Left cardiac atrium (tissue), 4 donors: ENCODE measurements at regions of chr22 and their contacts with region 1.

Region 1: DNA sequence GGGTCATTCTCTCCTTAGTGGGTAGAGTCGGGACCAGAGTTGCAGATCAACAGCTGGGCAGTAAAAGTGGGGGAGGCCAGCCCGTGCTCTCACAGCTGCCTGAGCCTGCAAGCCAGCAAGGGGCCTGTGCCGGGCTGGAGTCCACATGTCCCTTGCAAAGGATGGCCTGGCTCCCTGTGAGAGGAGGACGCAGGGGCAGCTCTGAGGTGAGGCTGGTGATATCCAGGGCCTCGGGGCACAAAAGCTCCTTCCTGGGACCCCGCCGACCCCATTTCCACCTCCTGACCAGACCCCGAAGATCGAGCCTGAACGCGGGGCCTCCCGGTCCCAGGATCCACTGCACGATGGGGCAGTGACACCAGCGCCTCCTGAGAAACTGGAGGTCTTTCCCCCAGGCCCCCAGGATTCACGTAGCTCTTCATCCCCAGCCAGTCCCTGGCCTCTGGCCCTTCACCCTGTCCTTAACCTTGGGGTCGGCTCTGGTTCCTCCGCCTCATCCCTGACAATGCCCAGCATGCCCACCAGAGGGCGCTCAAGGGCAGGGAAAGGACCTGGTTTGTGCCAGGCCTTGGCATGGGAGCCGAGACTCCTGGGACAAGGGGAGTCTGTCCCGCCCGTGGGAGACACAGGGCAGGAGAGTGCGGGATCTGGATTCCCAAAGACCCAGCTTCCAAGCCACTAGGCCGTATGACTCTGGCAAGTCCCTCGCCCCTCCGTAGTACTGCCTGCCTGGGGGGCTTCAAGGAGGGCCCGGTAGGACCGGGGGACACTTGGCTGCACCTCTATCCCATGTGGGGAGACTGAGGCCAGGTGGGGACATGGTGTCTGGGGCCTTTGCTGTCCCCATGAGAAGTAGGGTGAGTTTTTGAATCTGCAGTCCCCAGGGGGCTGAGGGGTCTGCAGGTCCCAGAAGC is 17.8 kb upstream of the WNT7B start:
- DNase-seq: peak; percentile 85
- ATAC-seq: peak; percentile 37 to 49

Region 2: DNA sequence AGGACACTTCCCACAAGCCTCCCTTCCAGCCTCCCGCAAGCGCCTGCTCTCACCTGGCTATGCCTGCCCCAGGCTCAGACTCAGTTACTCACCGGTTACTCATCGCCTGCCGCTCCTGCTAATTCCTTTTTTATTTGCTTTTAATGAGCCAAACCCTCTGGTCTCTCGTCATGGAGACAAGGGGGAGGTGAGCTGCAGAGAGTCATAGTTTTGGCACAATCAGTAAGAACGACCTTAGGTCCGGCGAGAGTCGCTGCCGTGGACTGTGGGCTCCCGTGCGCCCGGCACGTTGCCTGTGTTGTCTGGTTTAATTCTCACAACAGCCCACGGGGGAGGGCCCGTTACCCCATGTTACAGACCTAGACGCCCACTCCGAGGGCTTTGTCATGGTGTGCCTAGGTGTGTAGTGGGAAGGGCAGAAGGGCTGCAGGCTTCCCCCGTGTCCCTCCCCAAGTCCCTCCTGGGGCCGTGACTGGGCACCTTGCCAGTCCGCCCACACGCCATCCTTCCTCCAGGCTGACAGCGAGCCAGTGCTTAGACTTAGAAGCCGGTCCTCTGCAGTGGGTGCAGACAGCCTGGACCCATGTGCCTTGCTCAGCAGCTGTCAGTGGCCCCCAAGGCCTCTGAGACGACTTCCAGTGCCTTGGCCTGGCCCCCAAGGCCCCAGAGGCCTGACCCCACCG is 59.9 kb before region 1 on chr22:
- intact Hi-C with region 1: no loop called
- DNase-seq: no peak
- ATAC-seq: peak; percentile 23 to 85

Region 3: DNA sequence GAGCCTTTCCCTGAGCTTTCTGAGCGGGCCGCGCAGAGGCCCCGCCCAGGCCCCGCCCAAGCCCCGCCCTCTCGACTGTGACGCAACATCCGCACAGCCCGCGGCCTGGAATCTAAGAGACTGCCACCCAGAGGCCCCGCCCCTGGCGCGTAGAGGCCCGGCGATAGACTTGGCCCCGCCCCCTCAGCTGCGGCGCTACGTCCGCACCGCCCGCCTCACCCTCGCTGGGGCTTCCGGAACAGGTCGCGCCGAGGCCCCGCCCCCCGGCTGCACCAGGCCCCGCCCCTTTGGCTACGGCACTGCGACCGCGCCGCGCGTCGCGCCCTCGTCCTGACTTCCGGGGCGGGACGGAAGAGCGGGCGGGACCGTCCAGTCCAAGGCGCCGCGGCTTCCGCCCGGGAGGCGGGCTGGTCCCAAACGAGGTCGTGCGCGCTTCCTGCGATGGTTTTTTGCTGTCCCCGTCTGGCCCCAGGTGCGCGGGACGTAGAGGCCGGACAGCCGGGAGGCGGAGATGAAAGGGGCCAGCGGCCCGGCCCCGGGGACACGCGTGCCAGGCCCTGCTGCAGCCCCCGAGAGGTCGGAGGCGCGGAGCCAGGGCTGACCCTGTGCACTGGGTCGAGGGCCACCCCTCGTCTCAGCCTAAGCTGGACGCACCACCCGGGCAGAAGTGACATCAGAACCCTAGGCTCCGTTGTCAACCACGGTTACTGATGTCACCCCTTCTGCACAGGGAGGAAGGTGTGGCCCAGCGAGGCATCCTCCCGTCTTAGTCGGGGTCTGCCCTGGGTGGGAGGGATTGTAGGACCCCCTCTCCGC is 41.2 kb after region 1 on chr22:
- intact Hi-C with region 1: no loop called
- DNase-seq: peak; percentile 100
- ATAC-seq: peak; percentile 95 to 97

Region 4: DNA sequence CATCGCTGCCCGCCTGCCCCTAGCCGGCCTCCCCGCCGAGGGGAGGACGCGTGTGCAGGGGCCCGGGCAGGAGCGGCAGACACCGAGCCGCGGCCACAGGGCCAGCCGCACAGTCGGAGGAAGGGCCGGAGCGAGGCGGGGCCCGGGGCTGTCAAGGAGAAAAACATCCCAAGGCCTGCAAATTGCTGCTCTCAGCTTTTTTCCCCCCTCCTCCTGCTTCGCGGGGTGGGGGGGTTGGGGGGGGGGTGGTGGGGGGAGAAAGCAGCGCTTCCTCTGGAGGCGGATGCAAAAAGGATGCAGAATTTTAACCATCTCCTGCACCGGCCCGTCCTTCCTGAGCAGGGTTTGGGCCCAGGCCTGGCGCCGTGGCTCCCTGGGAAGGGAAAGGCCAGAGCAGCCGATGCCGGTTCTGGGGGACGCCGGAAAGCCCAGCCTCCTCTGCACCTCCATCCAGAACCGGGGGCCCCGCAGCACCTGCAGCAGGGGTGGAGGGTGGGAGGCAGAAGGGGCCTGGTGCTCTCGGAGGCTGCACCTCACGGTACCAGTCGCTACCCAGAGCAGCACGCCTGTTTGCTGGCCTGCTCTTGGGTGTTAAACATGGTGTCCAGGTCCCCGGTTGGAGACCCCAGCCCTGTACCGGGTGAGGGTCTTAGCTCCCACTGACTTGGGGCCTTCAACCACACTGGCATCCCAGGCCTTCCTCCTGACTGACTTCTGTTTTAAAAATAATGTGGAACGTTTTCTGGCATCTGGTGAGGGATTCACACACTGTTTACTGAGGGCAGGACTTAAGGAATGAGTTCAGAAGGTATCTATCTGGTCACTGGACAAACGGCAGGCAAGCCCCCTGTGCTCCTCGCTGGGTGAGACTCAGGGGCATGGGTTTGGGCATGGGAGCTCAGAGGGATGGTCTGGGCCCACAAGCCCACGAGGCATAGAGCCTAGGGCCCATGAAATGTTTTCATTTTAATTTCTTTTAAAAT is 59.6 kb after region 1 on chr22:
- intact Hi-C with region 1: no loop called
- DNase-seq: peak; percentile 73
- ATAC-seq: peak; percentile 71 to 72

Region 5: DNA sequence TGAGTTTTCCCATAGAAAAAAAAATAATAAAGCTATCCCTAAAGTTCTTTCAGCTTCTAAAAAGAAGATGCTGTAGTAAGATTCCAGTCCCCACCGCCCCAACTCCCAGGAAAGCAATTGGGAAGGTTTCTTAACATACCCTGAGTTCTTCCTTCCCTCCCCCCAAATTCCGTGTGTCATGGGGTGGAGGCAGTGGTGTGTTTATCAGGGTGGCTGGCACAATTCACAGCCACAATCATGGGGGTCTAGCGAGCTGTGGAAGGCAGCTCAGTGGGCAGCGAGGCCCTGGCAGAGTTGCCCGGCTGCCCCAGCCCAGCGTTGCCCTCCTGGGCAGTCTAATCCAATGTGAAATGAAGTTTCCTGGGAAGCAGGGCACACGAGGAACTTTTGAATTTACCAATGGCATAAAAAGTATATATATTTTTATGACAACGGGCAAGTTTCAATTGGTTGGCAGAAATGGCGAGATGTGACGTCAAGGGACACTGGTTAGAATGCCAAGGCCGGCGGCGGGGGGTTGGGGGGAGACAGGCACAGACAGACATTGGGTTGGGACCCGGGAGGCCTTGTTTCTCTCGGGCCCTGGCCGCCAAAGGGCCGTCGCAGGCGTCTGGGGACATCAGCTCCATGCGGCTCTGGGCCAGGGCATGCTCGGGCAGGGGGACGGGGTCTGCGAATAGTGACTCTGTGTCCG is 74.9 kb after region 1 on chr22:
- intact Hi-C with region 1: no loop called
- DNase-seq: peak; percentile 90
- ATAC-seq: peak; percentile 43 to 62

Region 6: DNA sequence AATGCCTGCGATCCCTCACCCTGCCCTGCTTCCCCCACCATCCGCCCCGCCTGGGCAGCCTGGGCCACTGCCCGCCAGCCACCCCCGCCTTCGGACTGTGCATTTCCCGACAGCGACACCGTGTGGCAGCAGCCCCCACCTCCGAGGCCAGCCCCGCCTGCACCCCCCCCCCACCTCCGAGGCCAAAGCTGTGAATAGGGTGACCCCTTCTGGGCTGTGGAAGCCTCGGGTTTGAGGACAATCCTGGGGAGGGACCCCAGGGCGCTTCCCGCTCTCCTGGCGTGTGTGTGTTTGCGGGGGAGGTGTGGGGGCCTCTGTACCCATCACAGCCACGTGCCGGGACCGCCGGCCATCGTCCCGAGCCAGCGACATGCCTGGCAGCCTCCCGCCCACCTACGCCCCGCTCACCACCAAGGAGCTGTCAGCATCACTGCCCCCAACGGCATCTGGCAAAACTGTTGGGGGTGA is 121.8 kb after region 1 on chr22:
- intact Hi-C with region 1: loop called in 1 of 2 experiments (anchors 1 kb)
- DNase-seq: peak; percentile 96
- ATAC-seq: peak; percentile 72 to 73

Region 7: GRCh38 chr22:46309526-46310085 is 314.9 kb after region 1 on chr22:
- intact Hi-C with region 1: loop called (anchors 5 to 10 kb)
- DNase-seq: no peak
- ATAC-seq: peak; percentile 70 to 80